ENCODE measurements at regions of chr20 and their contacts with region 1.

Region 1: GRCh38 chr20:19205977-19206396 is 6.5 kb upstream of the SLC24A3 start:
- DNase-seq: peak; percentile 63
- H3K4me3 ChIP-seq: no peak overlapping the region
- H3K27ac ChIP-seq: no peak overlapping the region
- H3K4me1 ChIP-seq: no peaks in the 10 kb centered on the region
- H3K27me3 ChIP-seq: peaks cover 13% of the 10 kb centered on the region

Region 2: DNA sequence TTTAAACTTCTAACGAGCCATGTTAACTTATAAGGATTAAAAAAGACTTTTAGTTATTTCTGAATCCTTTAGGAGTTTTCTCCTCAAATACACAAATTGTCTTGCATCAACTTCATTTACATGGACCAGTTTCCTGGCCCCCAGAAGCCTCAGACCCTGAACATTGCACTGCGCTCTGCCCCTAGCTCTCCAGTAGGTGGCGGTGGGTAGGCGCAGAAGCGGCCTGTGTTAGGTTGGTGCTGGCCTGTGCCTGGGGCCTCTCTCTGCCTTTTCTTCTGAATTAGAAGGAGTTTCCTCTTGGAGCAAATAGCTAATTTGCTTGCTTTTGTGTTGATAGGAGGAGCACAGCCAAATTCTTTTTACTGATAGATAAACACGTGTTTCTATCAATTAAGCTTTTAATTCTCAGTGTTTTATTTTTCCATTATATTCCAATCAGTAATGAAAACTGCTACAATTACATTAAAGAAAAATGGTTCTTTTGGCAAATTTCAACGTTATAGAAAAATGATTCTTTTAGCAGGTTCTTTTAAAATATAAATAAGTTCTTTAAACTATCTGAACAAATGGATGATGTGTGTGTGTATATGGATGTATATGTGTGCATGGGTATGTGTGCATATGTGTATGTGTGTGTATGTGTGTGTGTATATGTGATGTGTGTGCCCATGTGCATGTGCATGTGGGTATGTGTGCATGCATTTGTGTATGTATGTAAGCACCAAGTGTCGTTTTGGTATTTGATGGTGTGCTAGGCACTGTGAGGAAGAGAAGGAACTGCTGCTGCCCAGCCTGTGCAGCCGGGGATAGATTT is 573.6 kb before region 1 on chr20:
- in situ Hi-C with region 1: loop called (anchors 25 kb)
- DNase-seq: peak; percentile 79
- H3K4me3 ChIP-seq: no peak overlapping the region
- H3K27ac ChIP-seq: no peak overlapping the region
- H3K4me1 ChIP-seq: no peaks in the 10 kb centered on the region
- H3K27me3 ChIP-seq: no peaks in the 10 kb centered on the region

Region 3: DNA sequence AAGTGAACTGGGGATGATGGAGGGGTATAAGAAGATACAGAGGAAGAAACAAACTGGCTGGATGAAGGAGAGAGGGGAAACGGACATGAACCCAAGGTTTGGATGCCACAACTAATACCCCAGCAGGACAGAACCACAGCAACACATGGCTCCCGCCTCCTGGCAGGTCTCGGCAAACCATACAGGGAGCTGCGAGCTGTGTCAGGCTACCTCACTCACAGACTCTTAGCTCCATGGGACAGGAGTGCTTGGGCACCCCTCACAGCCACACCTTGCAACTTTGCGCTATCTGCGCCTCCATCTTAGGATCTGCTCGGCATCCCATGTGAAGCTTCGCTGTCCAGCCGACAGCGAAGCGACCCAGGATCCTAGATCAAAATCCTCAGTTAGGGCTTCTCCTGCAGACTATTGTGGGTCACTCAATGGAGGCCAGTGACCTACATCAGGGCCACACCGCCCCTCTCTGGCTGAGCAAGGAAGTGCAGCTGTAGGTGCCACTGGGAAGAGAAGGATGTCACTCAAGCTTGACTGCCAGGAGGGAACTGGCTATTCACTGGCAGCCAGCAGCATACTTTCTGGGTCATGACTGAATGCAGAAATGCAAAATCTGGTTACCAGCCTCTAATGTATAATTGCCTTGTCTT is 377.7 kb after region 1 on chr20:
- in situ Hi-C with region 1: loop called (anchors 10 kb)
- DNase-seq: peak; percentile 63
- H3K4me3 ChIP-seq: no peak overlapping the region
- H3K27ac ChIP-seq: no peak overlapping the region
- H3K4me1 ChIP-seq: no peaks in the 10 kb centered on the region
- H3K27me3 ChIP-seq: 0 out of 2 replicates have a peak, but pooled peaks cover 3% of the 10 kb centered on the region

Measured in GM23248 (cell line).